Transverse colon (tissue), 4 donors: ENCODE measurements at regions of chr10 and their contacts with region 1.

Region 1: GRCh38 chr10:79374312-79375191 is 27.3 kb downstream of the PPIF start:
- DNase-seq: peak; percentile 84
- H3K4me3 ChIP-seq: no peak overlapping the region
- H3K27ac ChIP-seq: no peak overlapping the region
- H3K4me1 ChIP-seq: peaks cover 4 to 18% (median 10%) of the 10 kb centered on the region in 4 donors
- H3K27me3 ChIP-seq: no peaks in the 10 kb centered on the region
- CTCF ChIP-seq: peak; percentile 95 to 99 (median 97)
- EP300 ChIP-seq: no peak
- POLR2A ChIP-seq: no peak

Region 2: DNA sequence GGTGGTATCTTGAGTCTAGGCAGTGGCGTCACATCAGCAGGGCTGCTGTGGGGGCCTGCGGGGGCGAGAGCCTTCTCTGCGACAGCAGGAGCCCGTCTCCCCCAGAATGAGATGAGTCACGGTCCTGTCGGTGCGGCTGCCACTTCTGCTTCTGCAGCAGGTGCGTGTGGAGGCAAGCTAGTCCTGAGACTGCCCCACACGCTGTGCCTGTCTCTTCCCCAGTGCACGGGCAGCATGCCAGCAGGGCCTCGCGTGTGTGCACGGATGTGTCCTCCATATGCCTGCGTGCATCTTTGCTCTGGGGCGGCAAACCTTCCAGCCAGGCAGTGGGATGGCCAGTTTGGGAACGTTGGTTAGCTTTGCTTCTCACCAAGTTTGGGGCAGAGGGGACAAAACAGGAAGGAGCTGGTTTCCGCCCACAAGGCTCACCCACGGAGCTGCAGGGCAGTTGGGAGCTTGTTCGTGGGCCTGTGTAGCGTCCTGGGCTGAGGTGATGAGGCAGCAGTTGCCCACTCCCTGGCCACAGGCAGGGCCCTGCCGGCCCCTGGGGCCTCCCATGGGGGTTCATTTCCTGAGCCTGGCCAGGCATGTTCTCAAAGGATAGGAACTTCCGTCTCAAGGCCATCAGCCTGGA is 88.1 kb before region 1 on chr10:
- in situ Hi-C with region 1: no loop called
- intact Hi-C with region 1: no loop called
- DNase-seq: peak; percentile 87
- H3K4me3 ChIP-seq: no peak overlapping the region
- H3K27ac ChIP-seq: peak overlapping the region; percentile 63 to 76 (median 69)
- H3K4me1 ChIP-seq: peaks cover 17 to 53% (median 33%) of the 10 kb centered on the region in 4 donors
- H3K27me3 ChIP-seq: no peaks in the 10 kb centered on the region
- CTCF ChIP-seq: no peak
- EP300 ChIP-seq: peak; percentile 55
- POLR2A ChIP-seq: no peak

Region 3: GRCh38 chr10:79463578-79464496 is 89.3 kb after region 1 on chr10:
- in situ Hi-C with region 1: loop called in 3 of 4 experiments (anchors 5 to 10 kb)
- intact Hi-C with region 1: loop called (anchors 2 kb)
- DNase-seq: no peak
- H3K4me3 ChIP-seq: no peak overlapping the region
- H3K27ac ChIP-seq: no peak overlapping the region
- H3K4me1 ChIP-seq: peaks cover 0 to 11% (median 2%) of the 10 kb centered on the region in 4 donors
- H3K27me3 ChIP-seq: no peaks in the 10 kb centered on the region
- CTCF ChIP-seq: no peak
- EP300 ChIP-seq: no peak
- POLR2A ChIP-seq: no peak

Region 4: GRCh38 chr10:79472951-79473350 is 98.4 kb after region 1 on chr10:
- in situ Hi-C with region 1: loop called (anchors 5 to 10 kb)
- intact Hi-C with region 1: no loop called
- DNase-seq: no peak
- H3K4me3 ChIP-seq: no peak overlapping the region
- H3K27ac ChIP-seq: no peak overlapping the region
- H3K4me1 ChIP-seq: peaks cover 0 to 2% (median 0%) of the 10 kb centered on the region in 4 donors
- H3K27me3 ChIP-seq: no peaks in the 10 kb centered on the region
- CTCF ChIP-seq: no peak
- EP300 ChIP-seq: no peak
- POLR2A ChIP-seq: no peak

Region 5: DNA sequence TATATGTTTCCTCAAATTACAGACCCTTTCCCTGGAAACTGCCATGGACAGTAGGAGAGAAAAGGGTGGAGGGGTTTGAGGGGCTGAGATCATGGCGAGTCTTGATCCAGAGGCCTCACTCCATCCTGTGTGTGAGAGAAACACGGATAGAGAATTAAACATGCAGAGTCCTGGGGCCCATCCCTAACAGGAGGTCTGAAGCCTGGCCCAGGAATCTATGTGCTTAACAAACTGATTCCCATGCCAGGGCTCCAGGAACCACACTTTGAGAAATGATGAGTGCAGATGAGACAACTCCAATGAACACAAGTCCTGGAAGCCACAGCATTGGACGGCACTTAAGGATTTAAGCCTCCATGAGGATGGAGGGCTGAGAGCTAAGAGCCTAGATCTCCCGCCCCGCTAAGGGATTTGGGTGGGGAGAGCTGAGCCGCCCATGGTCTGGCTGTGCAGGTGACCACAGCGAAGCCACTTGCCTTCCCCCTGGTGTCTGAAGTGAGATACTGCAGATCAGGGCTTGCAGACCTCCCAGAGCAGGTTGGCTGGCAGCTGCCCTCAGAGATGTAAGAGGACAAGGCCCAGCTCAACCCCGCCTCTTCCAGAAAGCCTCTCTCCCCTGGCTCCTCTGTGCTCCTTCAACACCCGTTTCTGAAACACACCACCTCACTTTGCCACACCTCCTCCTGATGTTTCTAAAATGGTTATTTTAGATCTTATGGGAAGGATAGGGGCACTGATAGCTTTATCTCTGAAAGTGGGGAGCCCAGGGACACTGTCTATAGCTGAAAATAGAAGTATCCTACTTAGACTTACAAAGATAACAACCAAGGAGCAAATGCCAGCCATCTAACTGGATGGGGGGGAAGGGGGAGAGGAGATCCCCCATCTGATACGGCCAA is 113.0 kb after region 1 on chr10:
- in situ Hi-C with region 1: no loop called
- intact Hi-C with region 1: loop called (anchors 5 kb)
- DNase-seq: peak; percentile 54
- H3K4me3 ChIP-seq: no peak overlapping the region
- H3K27ac ChIP-seq: peak overlapping the region; percentile 58 to 65 (median 62)
- H3K4me1 ChIP-seq: peaks cover 0 to 10% (median 3%) of the 10 kb centered on the region in 4 donors
- H3K27me3 ChIP-seq: no peaks in the 10 kb centered on the region
- CTCF ChIP-seq: peak; percentile 59 to 73 (median 66)
- EP300 ChIP-seq: no peak
- POLR2A ChIP-seq: no peak

Region 6: DNA sequence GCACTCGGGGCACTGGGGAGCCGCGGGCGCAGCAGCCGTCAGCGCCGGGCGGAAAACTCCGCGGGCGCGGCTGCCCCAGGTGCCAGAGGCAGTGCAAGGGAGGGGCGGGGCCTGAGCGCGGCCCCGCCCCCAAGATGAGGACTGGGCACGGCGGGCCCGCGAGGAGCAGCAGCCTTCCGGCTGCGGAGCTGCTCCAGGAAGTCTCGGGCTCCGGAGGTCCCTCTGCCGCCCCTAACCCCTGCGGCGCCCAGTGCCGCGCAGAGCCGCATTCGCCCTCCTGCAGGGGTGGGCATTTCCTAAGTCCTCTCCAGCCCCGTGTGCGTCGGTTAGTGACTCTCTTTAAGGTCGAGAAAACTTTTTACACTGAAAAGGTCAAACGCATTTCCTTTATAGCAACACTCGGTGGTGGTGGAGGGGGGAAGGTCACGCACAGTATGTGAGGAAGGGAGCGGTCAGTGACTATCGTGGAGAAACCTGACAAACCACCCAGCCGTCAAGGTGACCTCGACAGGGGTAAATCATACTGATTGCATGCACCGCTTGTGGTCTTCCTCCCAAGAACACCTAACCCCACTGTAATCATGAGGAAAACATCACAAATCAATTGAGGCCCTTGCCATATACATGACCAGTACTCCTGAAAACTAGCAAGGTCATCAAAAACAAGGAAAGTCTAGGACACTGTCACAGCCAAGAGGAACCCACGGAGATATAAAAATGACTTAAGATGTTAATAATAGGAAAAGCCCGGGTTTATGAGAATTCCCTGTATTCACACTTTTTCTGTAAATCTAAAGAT is 831.1 kb after region 1 on chr10 and contains the start of gene ANXA11:
- in situ Hi-C with region 1: loop called in 1 of 4 experiments (anchors 25 kb)
- intact Hi-C with region 1: no loop called
- DNase-seq: peak; percentile 92
- H3K4me3 ChIP-seq: peak within 1 kb of the TSS; percentile 86 to 96 (median 90)
- H3K27ac ChIP-seq: peak within 1 kb of the TSS; percentile 99 to 100 (median 100)
- H3K4me1 ChIP-seq: peaks cover 26 to 67% (median 54%) of the 10 kb centered on the region in 4 donors
- H3K27me3 ChIP-seq: no peaks in the 10 kb centered on the region
- CTCF ChIP-seq: peak in 2 of 5 experiments; percentile 11 to 26
- EP300 ChIP-seq: no peak
- POLR2A ChIP-seq: peak; percentile 99
- total RNA-seq, gene ANXA11: 134 to 247 (median 219) TPM